ENCODE measurements at regions of chr4 and their contacts with region 1.

Region 1: GRCh38 chr4:108053251-108053711 is 63.6 kb downstream of the HADH start:
- DNase-seq: no peak
- H3K4me3 Mint-ChIP-seq: no peak overlapping the region
- H3K27ac Mint-ChIP-seq: peak overlapping the region; percentile 78
- H3K4me1 Mint-ChIP-seq: peaks cover 76% of the 10 kb centered on the region
- H3K27me3 Mint-ChIP-seq: no peaks in the 10 kb centered on the region

Region 2: DNA sequence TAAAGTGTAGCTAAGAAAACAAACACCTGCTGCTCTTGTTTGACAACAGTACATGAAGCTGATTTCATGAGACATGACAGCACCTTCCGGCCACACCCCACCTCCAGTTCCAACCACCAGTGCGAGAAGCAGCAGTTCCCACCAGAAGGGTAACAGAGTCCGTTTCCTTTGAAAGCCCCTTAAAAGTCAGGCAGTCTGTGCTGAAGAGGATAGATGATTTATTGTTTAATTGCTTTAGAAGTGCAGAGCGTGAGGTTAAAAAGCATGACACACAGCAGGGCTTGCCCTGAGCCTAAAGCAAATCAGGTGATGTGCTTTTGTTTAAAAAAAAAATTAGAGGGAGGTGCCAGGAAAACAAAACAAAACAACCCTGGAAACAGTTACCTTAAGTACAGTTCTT is 19.0 kb after region 1 on chr4:
- CTCF ChIA-PET with region 1: no interaction called
- POLR2A ChIA-PET with region 1: no interaction called
- intact Hi-C with region 1: loop called (anchors 2 kb)
- DNase-seq: peak; percentile 71
- H3K4me3 Mint-ChIP-seq: no peak overlapping the region
- H3K27ac Mint-ChIP-seq: peak overlapping the region; percentile 68
- H3K4me1 Mint-ChIP-seq: peaks cover 74% of the 10 kb centered on the region
- H3K27me3 Mint-ChIP-seq: no peaks in the 10 kb centered on the region

Region 3: DNA sequence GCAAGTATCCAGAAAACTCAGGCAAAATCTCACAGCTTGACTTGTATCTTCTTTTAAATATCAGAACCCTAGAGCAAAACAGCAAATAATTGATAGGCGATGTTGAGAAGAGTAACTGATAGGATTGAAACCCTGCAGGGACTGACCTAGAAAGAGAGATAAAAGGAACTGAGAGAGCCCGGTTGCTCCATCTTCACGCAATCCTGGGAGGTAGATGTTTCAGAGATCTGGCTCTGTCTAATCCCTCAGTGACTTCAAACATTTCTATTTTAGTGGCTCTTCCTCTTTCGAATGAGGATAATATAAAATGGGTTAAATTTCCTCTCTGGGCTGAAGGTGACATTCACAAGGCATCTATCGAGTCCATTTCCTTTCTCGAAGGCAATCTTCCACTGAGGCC is 527.8 kb after region 1 on chr4:
- CTCF ChIA-PET with region 1: no interaction called
- POLR2A ChIA-PET with region 1: no interaction called
- intact Hi-C with region 1: no loop called
- DNase-seq: no peak
- H3K4me3 Mint-ChIP-seq: no peak overlapping the region
- H3K27ac Mint-ChIP-seq: no peak overlapping the region
- H3K4me1 Mint-ChIP-seq: peaks cover 3% of the 10 kb centered on the region
- H3K27me3 Mint-ChIP-seq: no peaks in the 10 kb centered on the region

Measured in activated CD4-positive, alpha-beta memory T cell treated with anti-CD3 and anti-CD28 coated beads for 36 hours (primary cell).